Upper lobe of right lung (tissue), 1 donor: ENCODE measurements at regions of chr9 and their contacts with region 1.

Region 1: DNA sequence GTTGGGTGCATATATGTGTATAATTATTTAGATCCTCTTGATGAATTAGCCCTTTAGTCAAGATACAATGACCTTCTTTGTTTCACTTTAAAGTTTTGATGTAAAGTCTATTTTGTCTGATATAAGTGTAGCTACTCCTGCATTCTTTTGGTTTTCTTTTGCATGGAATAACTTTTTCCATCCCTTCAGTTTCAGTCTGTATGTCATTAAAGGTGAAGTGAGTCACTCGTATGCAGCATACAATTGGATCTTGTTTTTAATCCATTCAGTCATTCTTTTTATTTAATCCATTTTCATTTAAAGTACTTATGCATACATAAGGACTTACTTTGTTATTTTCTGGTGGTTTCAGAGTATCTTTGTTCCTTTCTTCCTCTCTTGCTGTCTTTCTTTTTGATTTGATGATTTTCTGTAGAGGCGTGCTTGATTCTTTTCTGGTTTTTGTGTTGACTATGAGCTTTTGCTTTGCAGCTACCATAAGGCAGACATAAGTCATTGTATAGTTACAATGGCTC is 36.3 kb upstream of the FAM120A start:
- DNase-seq: no peak
- ATAC-seq: no peak
- H3K4me3 ChIP-seq: no peak overlapping the region
- H3K27ac ChIP-seq: no peak overlapping the region
- H3K4me1 ChIP-seq: no peaks in the 10 kb centered on the region
- H3K27me3 ChIP-seq: no peaks in the 10 kb centered on the region
- CTCF ChIP-seq: no peak

Region 2: DNA sequence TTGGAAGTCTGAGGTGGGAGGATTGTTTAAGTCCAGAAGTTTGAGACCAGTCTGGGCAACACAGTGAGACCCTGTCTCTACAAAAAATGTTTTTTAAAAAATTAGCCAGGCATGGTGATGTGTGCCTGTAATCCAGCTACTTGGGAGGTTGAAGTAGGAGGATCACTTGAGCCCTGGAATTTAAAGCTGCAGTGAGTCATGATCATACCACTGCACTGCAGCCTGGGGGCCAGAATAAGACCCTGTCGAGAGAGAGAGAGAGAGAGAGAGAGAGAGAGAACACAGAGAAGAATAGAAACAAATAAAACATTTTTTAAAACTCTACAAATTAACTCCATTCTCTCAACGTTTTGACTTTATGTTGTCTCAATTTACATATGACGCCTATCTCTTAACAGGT is 428.2 kb after region 1 on chr9:
- intact Hi-C with region 1: loop called (anchors 10 kb)
- DNase-seq: no peak
- ATAC-seq: no peak
- H3K4me3 ChIP-seq: no peak overlapping the region
- H3K27ac ChIP-seq: no peak overlapping the region
- H3K4me1 ChIP-seq: no peaks in the 10 kb centered on the region
- H3K27me3 ChIP-seq: no peaks in the 10 kb centered on the region
- CTCF ChIP-seq: no peak